ENCODE measurements at regions of chr6 and their contacts with region 1.

Region 1: DNA sequence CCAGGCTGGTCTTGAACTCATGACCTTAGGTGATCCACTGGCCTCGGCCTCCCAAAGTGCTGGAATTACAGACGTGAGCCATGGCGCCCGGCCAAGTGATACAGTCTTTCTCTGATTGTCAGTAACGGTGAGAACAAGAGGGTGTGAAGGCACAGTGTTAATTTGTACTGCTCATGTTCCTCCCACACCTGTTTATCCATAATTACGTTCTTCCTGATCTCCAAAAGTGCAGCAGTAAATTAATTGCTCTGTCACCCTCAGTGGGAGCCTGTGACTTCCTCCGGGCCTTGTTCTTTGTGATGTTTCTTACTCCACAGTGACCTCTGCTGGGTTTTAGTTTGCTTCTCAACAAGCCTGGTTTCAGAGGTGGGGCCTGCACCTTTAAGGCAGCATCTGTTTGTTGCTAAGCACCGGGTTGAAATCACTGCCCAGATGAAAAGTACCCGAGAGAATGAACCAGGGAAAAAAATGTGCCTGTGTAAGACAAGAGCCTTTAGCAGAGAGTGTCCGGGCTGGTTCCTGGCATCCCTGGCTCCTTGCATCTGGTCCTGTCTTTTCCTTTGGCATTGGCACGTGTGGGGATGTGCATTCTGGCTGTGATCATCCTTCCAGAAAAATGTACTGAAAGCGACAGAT is 89.1 kb upstream of the CLDN20 start:
- DNase-seq: peak; percentile 80
- H3K4me3 ChIP-seq: no peak overlapping the region
- CTCF ChIP-seq: peak; percentile 75

Region 2: DNA sequence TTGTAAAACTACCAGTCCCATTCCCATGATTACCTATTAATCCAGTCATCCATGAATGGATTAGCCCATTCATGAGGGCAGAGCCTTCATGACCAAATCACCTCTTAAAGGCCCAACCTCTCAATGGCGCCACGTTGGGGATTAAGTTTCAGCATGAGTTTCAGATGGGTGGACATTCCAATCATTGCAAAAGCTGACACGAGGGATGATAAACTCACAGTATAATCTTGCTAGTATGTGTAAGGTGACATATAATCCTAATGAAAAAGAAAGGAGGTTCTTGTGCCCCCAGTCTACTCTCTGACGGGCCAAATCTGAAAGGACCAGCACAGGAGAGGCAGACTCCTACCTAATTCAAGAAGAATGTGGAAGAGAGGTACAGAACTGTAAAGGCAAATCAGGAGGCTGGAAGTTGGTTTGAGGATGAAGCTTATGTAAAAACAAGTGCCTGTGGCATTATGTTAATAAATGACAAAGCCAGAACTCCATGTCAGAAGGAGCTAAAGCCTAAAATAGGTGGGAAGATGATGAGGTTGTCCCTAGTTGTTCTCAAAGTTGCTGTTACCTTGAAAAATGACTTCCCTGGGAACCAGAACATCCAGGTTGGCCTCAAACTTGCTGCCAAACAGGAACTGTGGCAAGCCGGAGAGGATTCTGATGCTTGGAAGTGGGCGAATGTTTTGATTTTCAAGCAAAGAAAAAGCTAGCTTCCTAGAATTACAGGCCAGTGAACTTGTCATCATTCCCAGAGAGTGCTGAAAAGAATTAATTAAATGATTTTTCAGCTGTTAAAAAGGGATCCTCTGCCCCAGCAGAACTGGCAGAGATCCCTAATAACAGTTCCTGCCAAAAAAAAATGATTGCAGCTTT is 286.0 kb before region 1 on chr6:
- in situ Hi-C with region 1: loop called (anchors 5 kb)
- DNase-seq: no peak
- H3K4me3 ChIP-seq: no peak overlapping the region
- CTCF ChIP-seq: no peak

Region 3: GRCh38 chr6:155253337-155253736 is 78.6 kb after region 1 on chr6:
- in situ Hi-C with region 1: loop called (anchors 5 kb)
- DNase-seq: no peak
- H3K4me3 ChIP-seq: no peak overlapping the region
- CTCF ChIP-seq: no peak

Region 4: DNA sequence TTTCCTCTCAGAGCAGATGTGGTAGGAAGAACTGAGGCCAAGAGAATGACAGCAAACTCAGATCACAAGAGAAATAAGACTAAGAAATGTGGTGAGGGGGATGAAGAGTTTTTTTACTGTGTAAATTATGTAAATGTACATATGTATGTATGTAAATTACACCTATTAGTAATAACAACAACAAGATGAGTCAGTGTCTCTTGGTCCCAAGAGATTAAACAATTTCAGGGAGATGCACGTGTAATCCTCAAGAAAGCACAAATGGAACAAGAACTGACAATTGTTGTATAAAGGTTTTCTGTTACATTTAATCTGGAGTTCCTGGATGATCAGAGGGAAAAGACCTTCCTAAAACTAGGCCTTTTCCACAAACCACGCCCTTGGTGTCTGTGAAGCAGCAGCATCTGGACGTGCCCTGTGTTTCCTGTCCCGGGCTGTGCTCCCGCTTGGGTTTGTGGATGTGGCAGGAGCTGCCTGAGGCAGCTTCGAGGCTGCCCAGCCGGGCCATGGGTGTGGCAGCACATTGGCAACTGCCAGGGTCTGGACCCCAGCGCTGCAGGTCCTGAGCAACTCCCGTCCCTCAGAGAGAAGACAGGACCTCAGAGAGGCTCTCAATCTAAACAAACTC is 90.1 kb after region 1 on chr6:
- in situ Hi-C with region 1: no loop called
- DNase-seq: no peak
- H3K4me3 ChIP-seq: no peak overlapping the region
- CTCF ChIP-seq: no peak

Measured in astrocyte of the cerebellum (primary cell).